GM13976 (cell line): ENCODE measurements at regions of chr20 and their contacts with region 1.

Region 1: GRCh38 chr20:50815162-50815989 is 20.5 kb downstream of the BCAS4 start:
- DNase-seq: no peak
- CTCF ChIP-seq: no peak

Region 2: DNA sequence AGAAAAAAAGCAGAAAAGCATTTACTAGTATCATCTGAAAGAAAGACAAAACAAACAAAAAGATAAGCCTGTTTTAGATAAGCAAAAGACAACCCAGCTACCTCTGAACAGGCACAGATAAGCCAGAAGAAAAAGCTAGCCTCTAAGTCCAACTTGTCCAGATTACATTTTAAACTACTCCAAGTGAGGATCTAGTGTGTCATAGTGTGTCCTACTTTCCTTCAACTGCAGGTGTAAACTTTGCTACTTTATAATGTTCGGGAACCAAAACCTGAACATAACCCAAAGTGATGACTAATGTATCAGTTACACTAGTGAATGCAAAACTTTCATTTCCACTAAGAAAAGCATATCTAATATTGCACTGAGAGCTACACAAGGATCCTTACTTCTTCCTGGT is 96.3 kb after region 1 on chr20:
- in situ Hi-C with region 1: no loop called
- DNase-seq: peak; percentile 33
- CTCF ChIP-seq: no peak

Region 3: DNA sequence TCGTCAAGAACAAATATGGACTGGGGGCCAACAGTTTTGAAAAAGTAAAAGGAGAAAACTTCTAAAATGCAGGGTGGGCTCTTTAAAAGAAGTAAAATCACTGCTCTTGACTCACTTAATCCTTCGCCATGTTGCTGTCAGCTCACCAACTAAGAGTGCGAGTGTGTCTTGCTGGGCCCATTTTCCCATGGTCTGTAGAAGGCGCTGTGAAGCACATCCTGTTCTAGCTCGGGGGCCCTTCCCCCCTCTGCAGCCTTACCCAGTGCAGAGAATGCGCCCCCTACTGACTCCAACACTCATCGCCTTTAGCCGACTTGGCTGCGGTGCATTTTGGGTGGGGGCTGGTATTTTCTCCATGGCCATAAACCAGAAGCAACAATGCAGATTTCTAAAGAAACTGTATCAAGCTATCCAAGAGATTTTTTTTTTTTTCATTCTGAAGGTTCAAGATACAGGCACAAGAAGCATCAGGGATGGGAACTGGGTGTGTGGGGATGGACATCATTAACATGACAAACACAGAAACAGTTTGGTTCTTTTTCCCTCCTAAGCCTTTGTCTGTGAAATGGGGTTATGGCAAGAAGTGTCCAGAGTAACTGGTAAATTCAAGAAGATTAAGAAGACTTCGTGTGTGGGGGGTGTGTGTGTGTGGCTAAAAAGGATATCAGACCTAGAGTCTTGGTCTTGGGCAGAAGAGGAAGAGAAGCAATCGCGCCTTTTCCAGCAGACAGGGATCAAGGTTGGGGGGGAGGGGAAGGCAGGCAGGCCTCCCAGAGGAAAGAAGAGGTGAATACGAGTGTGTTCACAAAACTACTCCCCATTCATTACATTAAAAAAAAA is 114.1 kb after region 1 on chr20:
- in situ Hi-C with region 1: loop called (anchors 10 kb)
- DNase-seq: peak; percentile 82
- CTCF ChIP-seq: peak; percentile 97